ENCODE measurements at regions of chr2 and their contacts with region 1.

Region 1: DNA sequence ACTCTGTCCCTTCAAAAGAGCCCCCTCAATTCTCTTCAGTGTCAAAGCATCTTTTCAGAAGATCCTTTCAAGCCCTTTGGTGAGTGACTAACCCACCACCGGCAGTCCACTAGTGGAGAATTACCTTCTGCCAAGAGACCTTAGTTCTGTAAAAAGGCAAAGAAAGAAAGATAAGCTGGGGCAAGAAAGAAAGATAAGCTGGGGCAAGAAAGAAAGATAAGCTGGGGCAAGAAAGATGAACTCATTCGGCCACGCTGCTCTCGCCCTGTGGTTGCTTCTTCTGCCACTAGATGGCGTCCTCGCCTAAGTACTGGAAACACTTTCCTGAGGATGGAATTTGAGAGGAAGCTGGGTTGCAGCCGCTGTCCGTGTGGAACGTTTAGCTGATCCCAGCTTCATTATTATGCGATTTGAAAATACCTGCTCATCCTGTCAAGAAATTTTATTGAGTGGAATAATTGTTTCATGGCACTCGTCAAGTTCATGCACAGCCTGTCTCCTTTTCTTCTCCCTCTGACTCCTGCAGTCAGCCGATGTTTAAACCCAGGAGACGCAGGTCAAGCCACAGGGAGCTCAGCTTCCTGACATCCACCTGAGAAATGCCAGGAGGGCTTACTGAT is 17.3 kb upstream of the ANXA4 start:
- DNase-seq: peak; percentile 80 to 96 (median 88)
- H3K4me3 ChIP-seq: peak overlapping the region; percentile 27 to 68 (median 51)
- H3K27ac ChIP-seq: peak overlapping the region in 12 of 59 donors; percentile 2 to 74 (median 38)
- H3K27me3 ChIP-seq: no peaks in the 10 kb centered on the region
- CTCF ChIP-seq: peak; percentile 91 to 99 (median 97)

Region 2: GRCh38 chr2:69577467-69578197 is 147.0 kb before region 1 on chr2:
- intact Hi-C with region 1: no loop called
- DNase-seq: no peak
- H3K4me3 ChIP-seq: no peak overlapping the region
- H3K27ac ChIP-seq: peak overlapping the region in 13 of 59 donors; percentile 2 to 61 (median 27)
- H3K27me3 ChIP-seq: no peaks in the 10 kb centered on the region
- CTCF ChIP-seq: no peak

Region 3: DNA sequence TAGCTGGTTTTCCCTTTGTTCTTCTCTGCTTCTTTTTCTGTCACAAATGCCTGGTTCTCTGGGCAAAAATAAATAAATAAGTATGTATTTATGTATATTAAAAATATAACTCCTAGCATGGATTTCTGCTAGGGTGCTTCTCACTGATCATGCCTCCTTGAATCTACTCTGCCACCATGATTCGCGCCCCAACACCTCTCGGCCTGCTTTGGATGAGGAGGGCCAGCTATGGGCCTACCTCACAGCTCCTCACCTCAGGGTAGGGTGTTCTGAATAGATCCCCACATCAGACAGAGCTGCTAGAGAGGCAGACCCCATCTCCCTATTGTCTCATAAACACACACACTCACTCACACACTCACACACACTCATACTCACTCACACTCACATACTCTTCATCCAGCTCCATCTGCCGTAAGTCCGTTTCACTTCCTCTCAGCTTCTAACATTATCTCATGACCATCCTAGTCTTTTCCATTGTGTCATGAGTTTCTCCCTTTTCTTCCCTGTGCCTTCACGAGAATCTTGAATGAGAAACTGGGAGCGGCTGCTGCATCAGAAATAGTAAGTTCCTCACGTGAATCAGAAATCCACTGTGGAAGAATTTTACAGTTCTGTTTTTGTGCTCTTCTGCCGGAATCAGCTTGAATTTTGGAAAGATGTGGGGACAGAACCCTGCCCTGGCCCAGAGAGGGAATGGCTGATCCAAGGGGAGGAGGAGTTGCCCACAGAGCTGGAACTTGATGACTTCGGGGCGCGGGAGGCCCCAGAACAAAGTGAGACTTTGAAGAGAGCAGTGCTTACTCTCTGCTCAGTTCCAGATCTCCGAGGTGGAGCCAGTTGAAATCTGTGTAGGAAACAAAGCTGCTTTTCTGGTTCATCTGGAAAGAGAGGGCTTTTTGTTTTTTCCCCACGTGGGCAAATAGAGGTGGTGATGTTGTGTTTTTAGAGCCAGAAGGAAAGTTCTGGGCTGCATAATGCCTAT is 38.2 kb after region 1 on chr2:
- intact Hi-C with region 1: loop called in 1 of 2 experiments (anchors 5 kb)
- DNase-seq: peak in 8 of 10 donors; percentile 38 to 75 (median 52)
- H3K4me3 ChIP-seq: peak overlapping the region in 56 of 59 donors; percentile 2 to 67 (median 41)
- H3K27ac ChIP-seq: peak overlapping the region; percentile 32 to 99 (median 90)
- H3K27me3 ChIP-seq: no peaks in the 10 kb centered on the region
- CTCF ChIP-seq: peak in 1 of 56 donors; percentile 31

Region 4: GRCh38 chr2:69816923-69817542 is 92.4 kb after region 1 on chr2:
- intact Hi-C with region 1: loop called (anchors 1 to 2 kb)
- DNase-seq: peak in 7 of 10 donors; percentile 63 to 94 (median 71)
- H3K4me3 ChIP-seq: no peak overlapping the region
- H3K27ac ChIP-seq: peak overlapping the region in 1 of 59 donors; percentile 20
- H3K27me3 ChIP-seq: no peaks in the 10 kb centered on the region
- CTCF ChIP-seq: peak; percentile 79 to 100 (median 96)

Region 5: GRCh38 chr2:69893684-69894551 is 169.3 kb after region 1 on chr2 and contains the start of gene SNRNP27:
- intact Hi-C with region 1: loop called (anchors 5 to 10 kb)
- DNase-seq: peak; percentile 65 to 89 (median 82)
- H3K4me3 ChIP-seq: peak within 1 kb of the TSS; percentile 58 to 99 (median 85)
- H3K27ac ChIP-seq: peak within 1 kb of the TSS in 56 of 59 donors; percentile 1 to 92 (median 80)
- H3K27me3 ChIP-seq: no peaks in the 10 kb centered on the region
- CTCF ChIP-seq: peak in 13 of 56 donors; percentile 9 to 39 (median 23)
- total RNA-seq, gene SNRNP27: 37.8 to 95.6 (median 69.7) TPM